Activated CD8-positive, alpha-beta T cell treated with anti-CD3 and anti-CD28 coated beads for 36 hours (primary cell): ENCODE measurements at regions of chr1 and their contacts with region 1.

Region 1: GRCh38 chr1:161382214-161383019 is 14.7 kb upstream of the CFAP126 start:
- DNase-seq: no peak
- ATAC-seq: peak; percentile 87
- H3K4me3 Mint-ChIP-seq: no peak overlapping the region
- H3K27ac Mint-ChIP-seq: no peak overlapping the region
- H3K4me1 Mint-ChIP-seq: peaks cover 16% of the 10 kb centered on the region
- H3K27me3 Mint-ChIP-seq: no peaks in the 10 kb centered on the region
- CTCF ChIP-seq: peak; percentile 84

Region 2: DNA sequence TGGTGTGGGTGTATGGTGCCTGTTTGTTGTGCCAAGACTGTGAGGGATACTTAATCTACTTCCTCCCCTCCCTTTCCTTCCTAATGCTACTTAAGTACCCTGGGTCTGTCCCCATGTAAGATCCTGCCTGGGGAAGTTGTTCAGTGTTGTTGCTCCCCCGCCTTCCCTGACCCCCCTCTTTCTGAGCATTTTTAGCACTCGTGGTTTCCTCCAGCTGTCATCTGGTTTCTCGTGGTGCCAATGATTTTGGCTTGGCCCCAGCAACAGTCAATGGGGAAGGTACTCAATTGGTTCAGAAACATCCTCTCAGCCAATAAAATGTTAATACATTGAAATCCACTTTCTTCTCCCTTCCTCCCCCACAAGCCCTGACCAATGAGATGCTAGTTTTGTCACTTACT is 197.1 kb before region 1 on chr1:
- CTCF ChIA-PET with region 1: interaction called, 15 read pairs
- POLR2A ChIA-PET with region 1: interaction called, 3 read pairs
- intact Hi-C with region 1: no loop called
- DNase-seq: peak; percentile 89
- ATAC-seq: peak; percentile 74
- H3K4me3 Mint-ChIP-seq: peak overlapping the region; percentile 48
- H3K27ac Mint-ChIP-seq: peak overlapping the region; percentile 95
- H3K4me1 Mint-ChIP-seq: peaks cover 74% of the 10 kb centered on the region
- H3K27me3 Mint-ChIP-seq: no peaks in the 10 kb centered on the region
- CTCF ChIP-seq: no peak

Region 3: DNA sequence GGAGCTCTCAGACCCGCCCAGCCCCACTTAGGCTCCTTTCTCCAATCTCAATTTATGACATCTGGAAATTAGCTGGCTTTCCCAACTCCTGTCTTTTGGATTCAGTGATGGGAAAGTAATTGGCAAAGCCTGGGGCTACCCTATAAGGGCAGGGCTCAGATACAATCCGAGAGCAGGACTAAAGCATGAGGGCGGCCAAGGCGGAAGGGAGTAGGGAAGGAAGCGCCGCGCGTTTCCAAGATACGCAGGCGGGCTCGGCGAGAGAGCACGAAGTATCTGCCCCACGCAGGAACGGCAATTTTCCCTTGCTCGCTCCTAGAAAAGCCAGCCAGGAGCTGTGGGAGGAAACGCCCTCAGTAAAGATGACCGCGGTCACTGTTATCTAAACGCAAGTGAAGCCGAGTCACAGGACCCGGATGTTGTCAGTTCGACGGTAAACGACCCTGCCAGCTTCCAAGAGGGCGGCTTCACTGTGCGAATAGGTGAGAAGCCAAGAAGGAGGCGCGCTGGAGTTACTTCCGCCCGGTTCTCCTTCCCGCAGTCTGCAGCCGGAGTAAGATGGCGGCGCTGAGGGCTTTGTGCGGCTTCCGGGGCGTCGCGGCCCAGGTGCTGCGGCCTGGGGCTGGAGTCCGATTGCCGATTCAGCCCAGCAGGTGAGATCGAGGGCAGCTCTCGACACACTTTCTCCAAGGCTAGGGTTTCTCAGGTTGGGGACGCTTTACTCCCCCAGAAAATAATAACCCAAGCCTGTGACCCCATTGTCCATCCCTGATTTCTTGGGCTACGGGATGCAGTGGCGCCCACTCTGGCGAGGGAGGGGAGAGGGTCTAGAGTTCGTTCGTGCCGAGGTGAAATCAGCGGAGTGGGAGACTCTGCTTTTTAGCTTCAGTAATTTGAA is 180.3 kb before region 1 on chr1 and contains the start of gene NDUFS2:
- CTCF ChIA-PET with region 1: interaction called, 49 read pairs
- POLR2A ChIA-PET with region 1: interaction called, 7 read pairs
- intact Hi-C with region 1: no loop called
- DNase-seq: peak; percentile 99
- ATAC-seq: peak; percentile 97
- H3K4me3 Mint-ChIP-seq: peak within 1 kb of the TSS; percentile 89
- H3K27ac Mint-ChIP-seq: peak within 1 kb of the TSS; percentile 96
- H3K4me1 Mint-ChIP-seq: peaks cover 57% of the 10 kb centered on the region
- H3K27me3 Mint-ChIP-seq: no peaks in the 10 kb centered on the region
- CTCF ChIP-seq: no peak
- total RNA-seq, gene NDUFS2: 85.9 to 97.1 TPM

Region 4: DNA sequence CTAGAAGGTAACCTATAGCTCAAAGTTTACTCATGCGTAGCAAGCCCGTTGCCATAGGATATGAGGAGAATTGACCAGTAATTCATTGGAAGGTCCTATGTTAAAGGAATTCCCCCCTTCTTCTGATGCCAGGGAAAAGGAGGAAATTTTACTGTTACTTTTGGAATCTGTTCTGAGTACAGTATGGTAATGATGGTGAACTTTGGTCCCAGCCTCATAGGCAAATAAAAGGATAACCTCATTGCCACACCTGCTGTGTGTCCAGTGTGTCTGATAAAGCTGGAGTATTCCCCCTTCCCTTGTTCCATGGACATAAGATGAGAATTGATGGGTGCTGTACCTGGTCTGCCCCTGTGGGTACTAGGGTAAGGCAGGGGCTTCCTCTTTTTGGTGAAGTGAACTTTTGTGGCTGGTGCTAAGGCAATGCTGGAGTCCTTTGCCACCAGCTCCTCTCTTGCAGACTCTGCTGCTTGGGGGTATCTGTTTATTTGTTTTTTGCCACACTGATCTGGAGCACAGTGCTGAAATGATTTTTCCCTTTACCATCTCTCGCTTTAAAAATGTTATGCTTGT is 94.8 kb before region 1 on chr1:
- CTCF ChIA-PET with region 1: interaction called, 29 read pairs
- POLR2A ChIA-PET with region 1: no interaction called
- intact Hi-C with region 1: no loop called
- DNase-seq: no peak
- ATAC-seq: no peak
- H3K4me3 Mint-ChIP-seq: no peak overlapping the region
- H3K27ac Mint-ChIP-seq: no peak overlapping the region
- H3K4me1 Mint-ChIP-seq: no peaks in the 10 kb centered on the region
- H3K27me3 Mint-ChIP-seq: no peaks in the 10 kb centered on the region
- CTCF ChIP-seq: no peak

Region 5: DNA sequence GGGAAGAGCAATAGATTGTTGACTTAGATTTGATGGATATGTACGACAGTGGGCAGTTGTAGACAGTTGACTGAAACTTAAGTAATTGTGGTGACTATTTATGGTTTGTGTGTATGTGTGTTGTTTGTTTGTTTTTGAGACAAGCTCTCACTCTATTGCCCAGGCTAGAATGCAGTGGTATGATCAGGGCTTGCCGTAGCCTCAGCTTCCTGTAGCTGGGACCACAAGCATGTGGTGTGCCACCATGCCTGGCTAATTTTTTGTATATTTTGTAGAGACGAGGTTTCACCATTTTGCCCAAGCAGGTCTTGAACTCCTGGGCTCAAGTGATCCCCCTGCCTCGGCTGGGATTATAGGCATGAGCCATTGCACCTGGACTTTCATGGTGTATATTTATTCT is 58.4 kb before region 1 on chr1:
- CTCF ChIA-PET with region 1: interaction called, 15 read pairs
- POLR2A ChIA-PET with region 1: no interaction called
- intact Hi-C with region 1: no loop called
- DNase-seq: no peak
- ATAC-seq: no peak
- H3K4me3 Mint-ChIP-seq: no peak overlapping the region
- H3K27ac Mint-ChIP-seq: peak overlapping the region; percentile 57
- H3K4me1 Mint-ChIP-seq: peaks cover 13% of the 10 kb centered on the region
- H3K27me3 Mint-ChIP-seq: no peaks in the 10 kb centered on the region
- CTCF ChIP-seq: no peak

Region 6: GRCh38 chr1:161357073-161357472 is 25.3 kb before region 1 on chr1:
- CTCF ChIA-PET with region 1: interaction called, 27 read pairs
- POLR2A ChIA-PET with region 1: no interaction called
- intact Hi-C with region 1: no loop called
- DNase-seq: no peak
- ATAC-seq: no peak
- H3K4me3 Mint-ChIP-seq: no peak overlapping the region
- H3K27ac Mint-ChIP-seq: no peak overlapping the region
- H3K4me1 Mint-ChIP-seq: peaks cover 15% of the 10 kb centered on the region
- H3K27me3 Mint-ChIP-seq: no peaks in the 10 kb centered on the region
- CTCF ChIP-seq: no peak

Region 7: GRCh38 chr1:161440312-161440894 is 58.0 kb after region 1 on chr1:
- CTCF ChIA-PET with region 1: no interaction called
- POLR2A ChIA-PET with region 1: no interaction called
- intact Hi-C with region 1: no loop called
- DNase-seq: peak; percentile 78
- ATAC-seq: peak; percentile 67
- H3K4me3 Mint-ChIP-seq: peak overlapping the region; percentile 84
- H3K27ac Mint-ChIP-seq: peak overlapping the region; percentile 91
- H3K4me1 Mint-ChIP-seq: peaks cover 9% of the 10 kb centered on the region
- H3K27me3 Mint-ChIP-seq: peaks cover 32% of the 10 kb centered on the region
- CTCF ChIP-seq: peak; percentile 62